Heart right ventricle (tissue), 16 donors: ENCODE measurements at regions of chr6 and their contacts with region 1.

Region 1: DNA sequence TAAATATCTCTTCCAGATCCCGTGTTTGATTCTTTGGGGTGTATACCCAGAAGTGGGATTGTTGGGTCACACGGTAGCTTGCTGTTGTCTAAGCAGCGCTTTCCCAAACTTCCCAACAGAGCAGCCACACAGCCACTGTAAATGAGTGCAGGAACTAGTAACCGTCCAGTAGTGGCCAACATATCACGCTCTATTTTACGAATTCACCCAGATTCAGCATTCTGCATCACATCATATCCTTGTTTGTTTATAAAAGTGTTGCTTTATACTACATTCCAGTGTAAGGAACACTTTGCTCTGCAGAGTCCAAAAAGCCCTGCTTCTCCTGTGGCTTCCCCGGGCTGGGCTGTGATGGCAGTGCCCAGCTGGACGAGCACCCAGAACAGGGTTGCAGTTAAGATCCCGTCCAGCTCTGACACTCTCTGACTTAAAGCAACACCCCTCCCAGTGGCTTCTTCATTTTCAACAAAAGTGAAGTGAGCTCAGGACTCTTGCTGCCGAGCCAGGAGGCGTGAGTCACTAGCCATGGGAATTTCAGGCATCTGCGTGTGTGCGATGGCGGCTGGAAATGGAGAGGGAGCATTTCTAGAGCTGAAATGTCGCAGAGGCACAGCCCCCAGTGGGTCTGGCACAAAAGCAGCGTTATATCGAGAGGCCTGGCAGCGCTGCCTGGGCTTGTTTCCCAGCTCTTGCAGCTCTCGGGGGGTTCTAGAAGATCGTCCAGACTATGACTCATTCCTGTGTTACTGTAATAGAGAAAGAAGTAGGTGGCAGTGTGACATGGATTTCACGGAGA is 216.3 kb upstream of the ECI2 start:
- DNase-seq: peak; percentile 75 to 80
- ATAC-seq: peak; percentile 62 to 85 (median 70)
- H3K4me3 ChIP-seq: peak overlapping the region in 8 of 10 donors; percentile 6 to 42 (median 25)
- H3K27ac ChIP-seq: peak overlapping the region; percentile 3 to 87 (median 84)
- H3K4me1 ChIP-seq: peaks cover 0 to 50% (median 29%) of the 10 kb centered on the region in 9 donors
- H3K27me3 ChIP-seq: no peaks in the 10 kb centered on the region
- CTCF ChIP-seq: peak in 3 of 9 donors; percentile 32 to 36 (median 34)

Region 2: DNA sequence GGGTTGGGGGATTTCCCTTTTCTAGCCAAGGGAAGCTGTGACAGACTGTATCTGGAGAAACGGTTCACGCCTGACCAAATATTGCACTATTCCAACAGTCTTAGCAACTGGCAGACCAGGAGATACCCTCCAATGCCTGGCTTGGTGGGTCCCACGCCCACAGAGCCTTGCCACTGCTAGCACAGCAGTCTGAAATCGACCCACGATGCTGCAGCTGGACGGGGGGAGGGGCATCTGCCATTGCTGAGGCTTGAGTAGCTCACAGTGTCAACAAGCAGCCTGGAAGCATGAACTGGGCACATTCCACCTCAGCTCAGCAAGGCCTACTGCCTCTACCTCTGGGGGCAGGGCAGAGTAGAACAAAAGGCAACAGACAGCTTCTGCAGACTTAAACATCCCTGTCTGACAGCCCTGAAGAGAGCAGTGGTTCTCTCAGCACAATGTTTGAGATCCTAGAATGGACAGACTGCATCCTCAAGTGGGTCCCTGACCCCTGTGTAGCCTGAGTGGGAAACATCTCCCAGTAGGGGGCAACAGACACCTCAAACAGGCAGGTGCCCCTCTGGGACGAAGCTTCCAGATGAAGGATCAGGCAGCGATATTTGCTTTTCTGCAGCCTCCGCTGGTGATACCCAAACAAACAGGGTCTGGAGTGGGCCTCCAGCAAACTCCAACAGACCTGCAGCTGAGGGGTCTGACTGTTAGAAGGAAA is 126.4 kb before region 1 on chr6:
- intact Hi-C with region 1: no loop called
- DNase-seq: no peak
- ATAC-seq: no peak
- H3K4me3 ChIP-seq: no peak overlapping the region
- H3K27ac ChIP-seq: no peak overlapping the region
- H3K4me1 ChIP-seq: peaks cover 0 to 4% (median 0%) of the 10 kb centered on the region in 9 donors
- H3K27me3 ChIP-seq: no peaks in the 10 kb centered on the region
- CTCF ChIP-seq: peak in 2 of 9 donors; percentile 9 to 11

Region 3: DNA sequence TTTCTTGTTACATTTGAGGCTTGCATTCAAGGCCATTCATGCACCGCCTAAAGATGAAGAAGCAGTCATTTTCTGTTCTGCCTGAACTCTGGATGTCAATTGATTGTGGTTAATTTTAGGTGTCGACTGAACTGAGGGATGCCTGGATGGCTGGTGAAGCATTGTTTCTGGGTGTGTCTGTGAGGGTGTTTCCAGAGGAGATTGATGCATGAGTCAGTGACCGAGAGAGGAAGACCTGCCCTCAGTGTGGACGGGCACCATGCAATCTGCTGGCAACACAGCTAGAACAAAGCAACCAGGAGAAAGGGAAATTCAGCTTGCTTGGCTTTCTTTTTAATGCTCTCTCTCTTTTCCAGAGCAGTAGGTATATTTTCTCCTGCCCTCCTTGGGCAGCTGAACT is 52.2 kb before region 1 on chr6:
- intact Hi-C with region 1: no loop called
- DNase-seq: no peak
- ATAC-seq: no peak
- H3K4me3 ChIP-seq: no peak overlapping the region
- H3K27ac ChIP-seq: no peak overlapping the region
- H3K4me1 ChIP-seq: peaks cover 0 to 14% (median 3%) of the 10 kb centered on the region in 9 donors
- H3K27me3 ChIP-seq: no peaks in the 10 kb centered on the region
- CTCF ChIP-seq: no peak

Region 4: DNA sequence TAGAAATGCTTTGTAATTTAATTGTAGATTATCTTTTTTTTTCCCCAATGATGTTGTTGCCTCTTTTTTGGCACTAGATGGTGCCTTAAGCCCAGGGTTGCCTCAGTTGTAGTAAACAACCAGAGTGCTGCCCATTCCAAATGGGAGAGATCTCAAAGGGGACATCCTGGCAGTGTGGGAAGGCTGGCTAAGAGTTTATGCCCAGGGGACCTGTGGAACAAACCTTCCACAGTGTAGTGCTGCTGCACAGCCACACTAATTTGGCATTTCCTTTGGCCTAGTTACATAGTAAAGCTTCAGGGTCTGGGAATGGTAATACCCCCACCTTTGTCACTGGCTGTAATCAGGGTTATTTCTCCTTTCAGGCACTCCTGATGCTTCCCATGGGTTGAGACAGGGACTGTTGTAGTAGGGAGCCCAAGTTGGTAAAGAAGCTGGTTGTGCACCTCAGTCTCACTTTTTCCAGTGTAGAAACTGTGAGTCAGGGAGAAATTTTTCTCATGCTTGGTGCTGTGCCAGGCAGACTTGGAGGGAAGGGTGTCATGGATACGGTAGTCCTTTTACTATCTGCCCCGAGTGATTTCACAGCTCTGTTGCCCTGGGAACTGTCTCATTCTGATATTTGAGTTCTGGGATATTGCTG is 38.6 kb before region 1 on chr6:
- intact Hi-C with region 1: loop called in 2 of 10 experiments (anchors 5 kb)
- DNase-seq: peak in 1 of 2 donors; percentile 36
- ATAC-seq: peak; percentile 35 to 75 (median 61)
- H3K4me3 ChIP-seq: no peak overlapping the region
- H3K27ac ChIP-seq: peak overlapping the region in 6 of 10 donors; percentile 6 to 57 (median 32)
- H3K4me1 ChIP-seq: peaks cover 3 to 29% (median 20%) of the 10 kb centered on the region in 9 donors
- H3K27me3 ChIP-seq: no peaks in the 10 kb centered on the region
- CTCF ChIP-seq: peak; percentile 13 to 60 (median 48)

Region 5: DNA sequence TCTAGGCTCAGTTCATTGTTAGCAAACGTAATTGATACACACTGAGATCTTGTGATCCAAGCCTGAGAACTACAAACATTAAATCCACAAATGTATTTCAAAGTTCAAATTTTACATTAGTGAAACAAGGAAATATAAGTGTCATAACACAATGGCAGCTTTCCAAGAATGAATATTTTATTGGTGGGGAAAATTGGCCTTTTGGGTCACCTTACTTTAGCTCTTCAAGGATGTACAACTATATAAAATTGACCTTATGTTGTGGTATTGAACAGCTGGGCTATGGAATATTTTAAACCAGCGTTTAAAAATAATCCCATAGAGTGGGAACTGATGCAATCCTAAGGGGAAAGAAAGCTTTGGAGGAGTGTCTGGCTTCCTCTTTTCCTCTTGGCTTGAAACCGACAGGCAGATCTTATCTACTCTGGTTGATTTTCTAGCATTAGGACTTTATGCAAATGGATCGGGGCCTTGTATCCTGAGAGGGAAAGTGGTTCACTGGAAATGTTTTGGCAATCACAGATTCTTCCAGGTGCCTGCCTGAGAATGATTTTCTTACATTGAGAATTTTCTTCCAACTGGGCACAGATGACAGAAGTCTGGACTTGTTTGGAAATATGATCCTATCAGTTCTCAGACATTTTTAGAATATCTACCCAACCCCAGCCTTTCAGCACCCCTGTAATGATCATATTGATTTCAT is 31.6 kb before region 1 on chr6:
- intact Hi-C with region 1: loop called in 3 of 10 experiments (anchors 2 to 5 kb)
- DNase-seq: peak in 1 of 2 donors; percentile 48
- ATAC-seq: peak in 7 of 8 donors; percentile 23 to 72 (median 45)
- H3K4me3 ChIP-seq: no peak overlapping the region
- H3K27ac ChIP-seq: peak overlapping the region in 8 of 10 donors; percentile 15 to 78 (median 54)
- H3K4me1 ChIP-seq: peaks cover 11 to 67% (median 49%) of the 10 kb centered on the region in 9 donors
- H3K27me3 ChIP-seq: no peaks in the 10 kb centered on the region
- CTCF ChIP-seq: no peak

Region 6: DNA sequence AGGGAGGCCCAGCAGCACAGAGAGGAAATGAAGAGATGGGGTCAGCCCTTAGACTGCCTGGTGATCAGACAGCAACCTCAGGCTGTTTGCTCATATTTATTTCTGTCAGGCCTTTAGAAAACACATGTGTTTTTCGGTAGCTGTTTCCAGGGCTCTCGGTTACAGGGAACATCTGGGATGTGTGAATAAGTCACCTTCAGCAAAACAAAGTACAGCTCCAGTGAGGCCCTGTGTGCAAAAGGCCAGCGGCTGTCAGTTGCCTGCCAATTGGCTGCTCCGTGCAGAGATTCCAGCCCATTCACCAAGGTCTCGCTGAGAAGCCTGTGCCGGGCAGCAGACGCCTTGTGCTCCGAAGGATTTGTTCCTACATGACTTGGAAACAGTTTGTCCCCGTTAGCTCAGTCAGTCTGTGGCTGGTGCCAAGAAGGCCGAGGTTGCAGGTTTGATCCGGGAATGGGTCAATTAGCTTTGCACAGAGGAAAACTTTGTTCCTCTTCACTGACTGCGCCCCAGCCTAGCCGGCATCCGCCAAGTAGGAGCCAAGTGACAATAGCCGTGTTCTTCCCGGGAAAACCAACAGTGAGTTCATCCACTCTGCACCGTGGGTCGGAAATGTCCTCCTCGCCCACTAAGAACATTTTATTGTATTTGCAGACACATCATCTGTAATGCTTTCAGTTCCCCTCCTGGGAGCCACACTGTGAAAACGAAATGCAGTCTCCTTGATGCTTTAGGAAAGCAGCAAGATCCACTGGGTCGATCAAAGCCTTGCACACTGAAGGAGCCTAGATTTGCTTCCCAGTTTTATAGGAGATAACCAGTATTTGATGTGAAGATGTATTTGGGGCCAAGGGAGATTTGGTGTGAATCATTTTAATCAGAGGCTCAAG is 109.1 kb after region 1 on chr6:
- intact Hi-C with region 1: loop called in 2 of 10 experiments (anchors 5 to 10 kb)
- DNase-seq: peak; percentile 39 to 67
- ATAC-seq: peak; percentile 82 to 95 (median 92)
- H3K4me3 ChIP-seq: peak overlapping the region in 2 of 10 donors; percentile 9 to 14
- H3K27ac ChIP-seq: peak overlapping the region; percentile 33 to 77 (median 67)
- H3K4me1 ChIP-seq: peaks cover 5 to 23% (median 19%) of the 10 kb centered on the region in 9 donors
- H3K27me3 ChIP-seq: no peaks in the 10 kb centered on the region
- CTCF ChIP-seq: no peak